Activated naive CD4-positive, alpha-beta T cell treated with anti-CD3 and anti-CD28 coated beads for 36 hours (primary cell): ENCODE measurements at regions of chr6 and their contacts with region 1.

Region 1: DNA sequence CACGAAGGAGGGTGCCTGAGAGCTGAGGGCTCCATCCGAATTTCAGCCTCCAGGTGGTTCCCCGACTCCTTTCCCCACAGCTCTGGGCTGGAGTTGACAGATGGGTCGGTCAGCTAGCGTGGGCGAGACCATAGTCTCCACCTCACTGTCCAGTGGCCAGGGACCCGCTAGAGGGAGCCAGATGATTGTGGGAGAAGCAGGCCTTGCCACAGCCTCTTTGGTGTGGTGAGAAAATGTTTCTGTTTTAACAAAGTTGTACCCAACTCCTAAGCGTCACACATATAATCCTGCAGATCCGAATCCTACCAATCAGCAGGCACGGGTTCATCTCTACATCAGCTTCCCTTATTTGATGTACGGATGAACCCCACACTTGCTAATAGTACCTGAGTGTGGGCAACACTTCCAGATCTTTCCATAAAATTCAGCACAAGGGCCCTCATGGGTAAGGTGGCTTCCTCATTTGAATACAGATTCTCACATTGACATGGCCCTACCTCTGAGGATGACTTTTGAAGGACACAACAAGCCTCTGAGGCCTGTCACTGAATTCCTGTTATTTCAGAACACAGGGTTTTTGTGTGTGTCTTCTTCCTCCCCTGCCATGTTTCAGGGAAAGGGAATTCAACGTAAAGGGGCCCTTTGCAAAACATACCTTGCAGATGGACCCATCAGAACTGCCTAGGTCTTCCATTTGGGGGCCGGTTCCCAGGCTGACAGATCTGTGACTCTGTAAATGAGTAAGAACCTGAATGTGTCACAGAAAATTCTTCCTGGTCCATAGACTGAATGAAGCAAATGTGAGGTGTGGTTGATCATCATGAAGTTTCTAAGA is 103.2 kb upstream of the DUSP22 start:
- DNase-seq: peak; percentile 94
- H3K4me3 Mint-ChIP-seq: no peak overlapping the region
- H3K27ac Mint-ChIP-seq: peak overlapping the region; percentile 69
- H3K4me1 Mint-ChIP-seq: peaks cover 49% of the 10 kb centered on the region
- H3K27me3 Mint-ChIP-seq: peaks cover 1% of the 10 kb centered on the region

Region 2: DNA sequence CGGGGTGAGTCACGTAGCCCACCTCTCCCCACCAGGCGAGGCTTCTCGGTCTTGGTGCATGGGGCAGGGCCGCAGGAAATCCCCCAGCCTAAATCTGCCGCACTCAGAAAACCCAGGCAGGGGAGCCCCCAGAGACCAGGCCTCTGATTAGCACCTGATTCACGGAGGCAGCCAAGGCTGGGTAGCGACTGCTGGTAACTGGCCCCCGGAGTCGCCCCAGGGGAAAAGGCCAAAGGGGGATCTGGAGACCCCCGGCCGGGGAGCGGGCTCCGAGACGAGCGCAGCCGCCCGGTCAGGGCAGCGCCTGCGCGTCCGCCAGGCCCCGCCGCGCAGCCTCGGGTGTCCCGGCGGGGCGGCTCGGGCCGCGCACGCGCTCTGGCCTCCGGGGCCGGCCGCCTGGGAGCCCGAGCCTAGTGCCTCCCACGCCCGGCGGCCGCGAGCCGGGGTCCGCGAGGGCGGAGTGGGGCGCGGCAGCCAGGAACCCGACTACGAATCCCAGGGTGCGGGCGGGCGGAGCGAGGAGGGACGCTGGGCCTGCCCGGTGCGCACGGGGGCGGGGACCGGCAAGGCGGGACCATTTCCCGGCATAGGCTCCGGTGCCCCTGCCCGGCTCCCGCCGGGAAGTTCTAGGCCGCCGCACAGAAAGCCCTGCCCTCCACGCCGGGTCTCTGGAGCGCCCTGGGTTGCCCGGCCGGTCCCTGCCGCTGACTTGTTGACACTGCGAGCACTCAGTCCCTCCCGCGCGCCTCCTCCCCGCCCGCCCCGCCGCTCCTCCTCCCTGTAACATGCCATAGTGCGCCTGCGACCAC is 102.9 kb after region 1 on chr6 and contains the start of gene DUSP22:
- CTCF ChIA-PET with region 1: interaction called, 6 read pairs
- intact Hi-C with region 1: loop called (anchors 1 kb)
- DNase-seq: peak; percentile 85
- H3K4me3 Mint-ChIP-seq: peak within 1 kb of the TSS; percentile 92
- H3K27ac Mint-ChIP-seq: peak within 1 kb of the TSS; percentile 95
- H3K4me1 Mint-ChIP-seq: peaks cover 67% of the 10 kb centered on the region
- H3K27me3 Mint-ChIP-seq: no peaks in the 10 kb centered on the region
- total RNA-seq, gene DUSP22: 44.6 to 46.9 TPM

Region 3: DNA sequence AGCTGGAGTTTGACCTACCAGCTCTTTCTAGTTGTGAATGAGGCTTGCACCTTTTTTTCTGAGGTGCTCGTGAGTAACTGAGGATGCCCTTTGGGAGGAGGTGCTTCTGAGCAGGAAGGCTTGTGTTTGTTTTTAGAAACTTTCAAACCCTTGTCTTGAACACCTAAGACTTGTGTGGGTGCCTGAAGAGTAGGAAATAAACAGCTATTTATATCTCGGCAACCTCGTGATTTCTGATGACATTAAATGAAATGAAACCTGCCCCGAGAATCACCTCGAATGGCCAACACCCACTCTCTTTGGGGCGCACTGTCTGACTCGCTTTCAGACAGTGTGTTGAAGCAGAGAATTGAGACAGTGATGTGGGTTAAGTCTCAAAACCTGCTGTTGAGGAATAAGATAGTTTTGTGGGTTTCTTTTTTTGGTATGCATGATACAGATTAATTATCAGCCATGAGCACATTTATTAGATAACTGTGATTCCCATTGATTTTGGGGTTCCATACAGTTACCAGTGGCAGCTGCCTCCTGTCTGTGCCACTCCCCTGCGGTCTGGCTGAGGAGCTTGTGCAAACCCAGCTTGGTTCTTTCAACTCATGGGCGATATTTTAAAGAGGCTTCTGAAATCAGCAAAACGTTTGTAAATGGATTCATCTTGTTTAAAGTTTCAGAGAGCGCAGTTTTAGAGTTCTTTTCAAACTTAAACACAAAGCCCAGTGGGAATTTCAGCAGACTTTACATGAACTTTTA is 210.9 kb after region 1 on chr6:
- CTCF ChIA-PET with region 1: interaction called, 10 read pairs
- intact Hi-C with region 1: loop called (anchors 2 kb)
- DNase-seq: peak; percentile 73
- H3K4me3 Mint-ChIP-seq: peak overlapping the region; percentile 56
- H3K27ac Mint-ChIP-seq: peak overlapping the region; percentile 89
- H3K4me1 Mint-ChIP-seq: peaks cover 91% of the 10 kb centered on the region
- H3K27me3 Mint-ChIP-seq: no peaks in the 10 kb centered on the region

Region 4: DNA sequence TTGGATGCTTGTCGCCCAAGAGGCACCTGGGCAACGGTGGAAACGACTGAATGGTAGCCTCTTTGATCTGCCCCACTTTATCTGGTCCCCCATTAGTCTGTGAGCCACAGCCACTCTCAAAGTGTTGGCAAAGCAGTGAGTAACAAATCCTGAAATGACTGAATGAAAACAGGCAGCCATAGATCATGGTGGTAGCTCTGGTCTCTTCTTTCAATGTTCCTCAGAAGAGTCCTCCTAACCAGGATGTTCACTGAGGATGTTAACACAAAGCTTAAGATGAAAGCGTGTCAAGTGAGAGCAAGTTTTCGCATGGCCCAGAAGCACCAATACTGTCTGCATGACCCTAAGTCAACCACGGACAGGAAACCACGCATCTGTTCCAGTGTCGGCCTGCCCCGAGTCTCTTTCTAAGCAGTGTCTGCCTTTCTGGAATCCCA is 309.8 kb after region 1 on chr6:
- CTCF ChIA-PET with region 1: no interaction called
- intact Hi-C with region 1: loop called (anchors 2 kb)
- DNase-seq: peak; percentile 80
- H3K4me3 Mint-ChIP-seq: peak overlapping the region; percentile 56
- H3K27ac Mint-ChIP-seq: peak overlapping the region; percentile 96
- H3K4me1 Mint-ChIP-seq: peaks cover 83% of the 10 kb centered on the region
- H3K27me3 Mint-ChIP-seq: no peaks in the 10 kb centered on the region

Region 5: GRCh38 chr6:683742-684440 is 494.9 kb after region 1 on chr6:
- CTCF ChIA-PET with region 1: no interaction called
- intact Hi-C with region 1: loop called (anchors 1 kb)
- DNase-seq: no peak
- H3K4me3 Mint-ChIP-seq: peak overlapping the region; percentile 10
- H3K27ac Mint-ChIP-seq: no peak overlapping the region
- H3K4me1 Mint-ChIP-seq: peaks cover 52% of the 10 kb centered on the region
- H3K27me3 Mint-ChIP-seq: no peaks in the 10 kb centered on the region

Region 6: DNA sequence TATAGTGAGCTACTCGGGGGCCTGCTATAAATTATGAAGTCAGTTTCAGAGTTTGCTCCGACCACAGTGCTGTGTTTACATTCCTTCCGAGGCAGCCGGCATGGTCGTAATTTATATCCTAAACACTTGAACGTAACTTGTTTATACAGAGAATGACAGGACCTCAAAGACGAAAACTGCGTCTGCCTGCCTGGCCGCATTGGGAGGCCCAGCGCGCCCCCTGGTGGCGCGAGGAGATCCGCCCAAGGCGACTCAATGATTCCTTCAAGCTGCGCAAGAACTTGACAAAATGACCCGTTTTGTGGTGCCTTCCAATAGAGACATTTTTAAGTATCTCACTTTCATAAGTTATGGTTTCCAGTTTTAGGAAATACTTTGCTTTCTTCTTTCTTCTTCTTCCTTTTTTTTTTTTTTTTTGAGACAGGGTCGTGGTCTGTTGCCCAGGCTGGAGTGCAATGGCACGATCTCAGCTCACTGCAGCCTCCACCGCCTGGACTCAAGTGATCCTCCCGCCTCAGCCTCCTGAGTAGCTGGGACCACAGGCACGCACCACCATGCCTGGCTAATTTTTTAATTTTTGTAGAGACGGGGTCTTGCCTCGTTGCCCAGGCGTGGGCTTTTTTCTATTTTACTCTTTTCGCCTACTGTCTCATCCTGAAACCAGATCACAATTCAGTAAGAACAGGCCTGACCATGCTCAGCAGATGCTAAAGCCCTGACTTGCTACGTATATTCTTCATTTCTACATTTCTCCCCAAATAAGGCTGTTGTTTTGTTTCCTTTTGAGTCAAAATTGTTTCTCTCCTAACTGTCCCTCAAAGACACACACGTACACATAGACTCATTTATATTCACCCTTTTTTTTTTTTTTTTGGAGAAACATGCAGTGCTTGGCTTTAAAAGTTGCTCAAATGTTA is 1208.2 kb after region 1 on chr6:
- CTCF ChIA-PET with region 1: interaction called, 3 read pairs
- intact Hi-C with region 1: loop called (anchors 5 kb)
- DNase-seq: peak; percentile 80
- H3K4me3 Mint-ChIP-seq: no peak overlapping the region
- H3K27ac Mint-ChIP-seq: no peak overlapping the region
- H3K4me1 Mint-ChIP-seq: peaks cover 10% of the 10 kb centered on the region
- H3K27me3 Mint-ChIP-seq: peaks cover 53% of the 10 kb centered on the region